ENCODE measurements at regions of chr15 and their contacts with region 1.

Region 1: GRCh38 chr15:71800835-71801745 is 9.3 kb upstream of the NR2E3 start:
- DNase-seq: peak; percentile 46 to 57 (median 54)
- ATAC-seq: peak; percentile 87
- H3K4me3 ChIP-seq: no peak overlapping the region
- H3K27ac ChIP-seq: no peak overlapping the region
- H3K4me1 ChIP-seq: peaks cover 0 to 8% of the 10 kb centered on the region in 2 experiments; a peak in 2 of 5 replicates
- H3K27me3 ChIP-seq: peaks cover 3 to 25% of the 10 kb centered on the region in 2 experiments; a peak in 2 of 5 replicates
- CTCF ChIP-seq: peak; percentile 61 to 88 (median 74)
- EP300 ChIP-seq: no peak
- POLR2A ChIP-seq: no peak
- RAD21 ChIP-seq: peak; percentile 75 to 83

Region 2: DNA sequence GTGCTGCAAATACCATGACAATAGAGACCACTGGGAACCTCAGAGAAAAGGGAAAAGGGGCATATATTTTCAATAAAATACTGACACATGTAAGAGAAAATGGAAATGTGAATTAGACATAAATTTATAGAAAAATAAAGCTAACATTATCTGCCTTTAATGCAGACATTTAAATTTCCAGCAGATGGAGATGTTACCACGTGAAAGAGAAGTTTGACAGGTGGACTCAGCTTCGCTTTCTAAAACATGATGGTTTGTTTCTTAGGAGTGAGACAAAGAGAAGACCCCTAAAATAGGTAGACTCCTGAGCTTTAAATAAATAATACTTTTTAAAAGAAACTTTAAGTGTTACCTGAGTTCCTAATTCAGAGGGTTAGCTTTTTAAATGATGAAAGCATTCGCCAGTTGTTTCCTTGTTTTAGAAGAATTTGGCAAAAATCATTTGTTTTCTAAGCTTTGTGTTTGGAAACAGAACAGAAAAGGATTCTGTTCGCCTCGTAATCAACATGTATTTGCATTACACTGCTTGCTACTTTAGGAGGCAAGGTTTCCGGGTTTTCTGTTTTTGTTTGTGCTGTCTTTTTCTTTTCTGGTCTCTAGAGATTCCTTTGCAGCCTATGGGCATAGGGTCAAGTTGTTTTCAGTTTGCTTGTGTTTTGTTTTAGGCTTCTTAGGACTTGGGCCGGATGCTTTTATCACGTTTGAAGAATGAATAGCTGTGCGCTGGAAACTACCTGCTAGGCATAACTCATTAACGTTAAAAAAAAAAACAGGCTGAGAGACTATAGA is 414.4 kb before region 1 on chr15:
- CTCF ChIA-PET with region 1: no interaction called
- POLR2A ChIA-PET with region 1: no interaction called
- in situ Hi-C with region 1: no loop called
- intact Hi-C with region 1: loop called (anchors 10 kb)
- DNase-seq: peak in 1 of 4 experiments; percentile 12
- ATAC-seq: no peak
- H3K4me3 ChIP-seq: no peak overlapping the region
- H3K27ac ChIP-seq: no peak overlapping the region
- H3K4me1 ChIP-seq: no peaks in the 10 kb centered on the region
- H3K27me3 ChIP-seq: no peaks in the 10 kb centered on the region; a peak in 1 of 5 replicates
- CTCF ChIP-seq: peak in 1 of 3 experiments; percentile 53; a peak in 2 of 6 replicates
- EP300 ChIP-seq: no peak
- POLR2A ChIP-seq: no peak
- RAD21 ChIP-seq: peak; percentile 54 to 61

Region 3: DNA sequence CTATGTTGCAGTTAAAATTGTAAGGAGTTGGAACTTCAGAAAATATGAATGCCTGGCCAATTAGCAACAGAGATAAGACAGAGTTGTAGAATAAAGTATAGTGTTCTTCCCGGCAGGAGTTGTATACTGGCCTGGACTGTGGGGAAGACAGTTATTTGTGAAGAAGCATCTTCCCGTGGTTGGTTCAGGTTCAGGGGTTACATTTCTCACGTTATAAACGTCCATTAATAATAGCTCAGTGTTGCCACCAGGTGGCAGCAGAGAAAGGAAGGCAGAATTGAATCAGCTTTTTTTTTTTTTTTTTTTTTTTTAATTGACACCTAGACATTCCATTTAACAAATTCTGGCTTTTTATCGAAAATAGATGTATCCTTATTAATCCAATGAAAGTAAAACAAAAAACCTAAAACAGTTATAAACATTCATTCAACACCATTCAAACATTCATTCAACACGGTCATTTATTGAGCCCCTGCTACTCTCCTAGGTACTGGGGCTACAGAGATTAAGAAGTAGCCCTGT is 57.2 kb before region 1 on chr15:
- CTCF ChIA-PET with region 1: interaction called, 23 read pairs
- POLR2A ChIA-PET with region 1: interaction called, 3 read pairs
- in situ Hi-C with region 1: loop called (anchors 5 kb)
- intact Hi-C with region 1: loop called (anchors 2 kb)
- DNase-seq: peak; percentile 45 to 66 (median 56)
- ATAC-seq: peak; percentile 77
- H3K4me3 ChIP-seq: no peak overlapping the region
- H3K27ac ChIP-seq: no peak overlapping the region
- H3K4me1 ChIP-seq: no peaks in the 10 kb centered on the region
- H3K27me3 ChIP-seq: peaks cover 15 to 41% of the 10 kb centered on the region in 2 experiments; a peak in 4 of 5 replicates
- CTCF ChIP-seq: peak; percentile 54 to 74 (median 61); a peak in 5 of 6 replicates
- EP300 ChIP-seq: no peak
- POLR2A ChIP-seq: no peak
- RAD21 ChIP-seq: peak; percentile 29 to 32

Region 4: GRCh38 chr15:71939981-71940588 is 139.0 kb after region 1 on chr15:
- CTCF ChIA-PET with region 1: no interaction called
- POLR2A ChIA-PET with region 1: no interaction called
- in situ Hi-C with region 1: no loop called
- intact Hi-C with region 1: no loop called
- DNase-seq: no peak
- ATAC-seq: no peak
- H3K4me3 ChIP-seq: no peak overlapping the region
- H3K27ac ChIP-seq: no peak overlapping the region
- H3K4me1 ChIP-seq: no peaks in the 10 kb centered on the region
- H3K27me3 ChIP-seq: no peaks in the 10 kb centered on the region
- CTCF ChIP-seq: no peak
- EP300 ChIP-seq: no peak
- POLR2A ChIP-seq: no peak
- RAD21 ChIP-seq: no peak